K562 (cell line): ENCODE measurements at regions of chr17 and their contacts with region 1.

Region 1: GRCh38 chr17:12047681-12048376 is 27.2 kb downstream of the MAP2K4 start:
- DNase-seq: peak in 3 of 4 experiments; percentile 16 to 33 (median 17)
- ATAC-seq: no peak; the same call in 1 of the 3 replicates
- H3K4me3 ChIP-seq: no peak overlapping the region
- H3K27ac ChIP-seq: no peak overlapping the region
- H3K4me1 ChIP-seq: peaks cover 0 to 13% of the 10 kb centered on the region in 2 experiments; a peak in 2 of 5 replicates
- H3K27me3 ChIP-seq: no peaks in the 10 kb centered on the region
- CTCF ChIP-seq: no peak
- EP300 ChIP-seq: no peak
- POLR2A ChIP-seq: no peak
- RAD21 ChIP-seq: no peak

Region 2: GRCh38 chr17:12020642-12021622 is 26.9 kb before region 1 on chr17 and contains the start of gene MAP2K4:
- CTCF ChIA-PET with region 1: no interaction called
- POLR2A ChIA-PET with region 1: interaction called, 11 read pairs
- in situ Hi-C with region 1: no loop called
- intact Hi-C with region 1: no loop called
- DNase-seq: peak; percentile 85 to 93 (median 92)
- ATAC-seq: peak; percentile 99
- H3K4me3 ChIP-seq: peak within 1 kb of the TSS; percentile 76
- H3K27ac ChIP-seq: peak within 1 kb of the TSS; percentile 69
- H3K4me1 ChIP-seq: peaks cover 8 to 13% of the 10 kb centered on the region in 2 experiments; a peak in 4 of 5 replicates
- H3K27me3 ChIP-seq: no peaks in the 10 kb centered on the region
- CTCF ChIP-seq: no peak
- EP300 ChIP-seq: no peak
- POLR2A ChIP-seq: peak; percentile 40; the same call in 1 of the 2 replicates
- RAD21 ChIP-seq: no peak
- polyA plus RNA-seq, gene MAP2K4: 3.0 to 4.0 TPM

Region 3: DNA sequence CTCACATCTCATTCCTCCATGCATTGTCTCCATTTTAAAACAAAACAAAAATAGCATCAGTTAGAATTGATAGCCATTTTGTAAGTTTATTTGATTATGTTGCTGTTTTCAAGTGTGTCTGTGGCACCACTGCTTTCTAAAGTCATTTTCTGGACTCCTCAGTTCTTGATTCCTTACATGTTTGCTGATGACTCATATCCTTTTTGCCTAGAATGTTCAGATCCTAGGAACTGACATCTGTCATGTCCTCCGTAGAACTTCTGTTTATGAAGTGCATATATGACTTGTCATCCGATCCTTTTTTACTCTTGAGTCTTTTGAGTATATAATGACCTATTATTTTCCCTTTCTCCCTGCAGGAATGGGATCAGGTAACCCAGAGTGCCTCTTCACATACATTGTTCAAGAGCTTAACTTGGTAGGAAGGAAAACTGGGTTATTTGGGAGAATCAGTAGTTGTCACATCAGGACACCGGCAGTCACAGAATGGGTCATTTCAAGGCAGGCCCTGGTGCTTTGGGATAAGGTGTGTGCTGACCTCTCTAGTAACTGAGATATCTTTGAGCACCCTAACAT is 42.1 kb after region 1 on chr17:
- CTCF ChIA-PET with region 1: no interaction called
- POLR2A ChIA-PET with region 1: no interaction called
- in situ Hi-C with region 1: no loop called
- intact Hi-C with region 1: no loop called
- DNase-seq: peak in 3 of 4 experiments; percentile 5 to 32 (median 21)
- ATAC-seq: no peak
- H3K4me3 ChIP-seq: no peak overlapping the region
- H3K27ac ChIP-seq: peak overlapping the region; percentile 66; the same call in 2 of the 3 replicates
- H3K4me1 ChIP-seq: peaks cover 0 to 10% of the 10 kb centered on the region in 2 experiments; a peak in 1 of 5 replicates
- H3K27me3 ChIP-seq: no peaks in the 10 kb centered on the region
- CTCF ChIP-seq: no peak
- EP300 ChIP-seq: no peak
- POLR2A ChIP-seq: no peak
- RAD21 ChIP-seq: no peak